Mucosa of descending colon (tissue), 3 donors: ENCODE measurements at regions of chr5 and their contacts with region 1.

Region 1: GRCh38 chr5:67246108-67246507 is 49.5 kb upstream of the CD180 start:
- DNase-seq: peak in 1 of 3 donors; percentile 67
- ATAC-seq: peak; percentile 72
- H3K4me3 ChIP-seq: no peak overlapping the region
- H3K4me1 ChIP-seq: peaks cover 4% of the 10 kb centered on the region
- CTCF ChIP-seq: no peak

Region 2: DNA sequence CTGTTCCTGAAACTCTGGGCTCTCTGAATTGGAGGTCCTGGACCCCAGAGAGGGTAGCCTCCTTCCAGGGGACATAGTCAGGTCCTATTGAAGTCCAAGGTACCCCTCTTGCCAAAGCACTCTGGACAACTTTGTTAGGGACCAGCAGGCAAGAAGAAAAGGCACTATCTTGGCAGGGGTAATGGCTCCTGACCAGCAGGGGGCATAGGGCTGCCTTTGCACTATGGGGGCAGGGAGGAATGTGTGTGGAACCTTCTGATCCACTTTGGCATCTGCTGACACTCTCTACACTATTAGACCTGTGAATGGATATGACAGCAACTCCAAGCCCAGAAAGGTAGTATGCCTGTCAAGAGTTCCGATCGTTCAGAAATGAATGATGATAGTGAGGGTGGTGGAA is 129.5 kb after region 1 on chr5:
- intact Hi-C with region 1: no loop called
- DNase-seq: no peak
- ATAC-seq: peak; percentile 13
- H3K4me3 ChIP-seq: no peak overlapping the region
- H3K4me1 ChIP-seq: no peaks in the 10 kb centered on the region
- CTCF ChIP-seq: no peak

Region 3: DNA sequence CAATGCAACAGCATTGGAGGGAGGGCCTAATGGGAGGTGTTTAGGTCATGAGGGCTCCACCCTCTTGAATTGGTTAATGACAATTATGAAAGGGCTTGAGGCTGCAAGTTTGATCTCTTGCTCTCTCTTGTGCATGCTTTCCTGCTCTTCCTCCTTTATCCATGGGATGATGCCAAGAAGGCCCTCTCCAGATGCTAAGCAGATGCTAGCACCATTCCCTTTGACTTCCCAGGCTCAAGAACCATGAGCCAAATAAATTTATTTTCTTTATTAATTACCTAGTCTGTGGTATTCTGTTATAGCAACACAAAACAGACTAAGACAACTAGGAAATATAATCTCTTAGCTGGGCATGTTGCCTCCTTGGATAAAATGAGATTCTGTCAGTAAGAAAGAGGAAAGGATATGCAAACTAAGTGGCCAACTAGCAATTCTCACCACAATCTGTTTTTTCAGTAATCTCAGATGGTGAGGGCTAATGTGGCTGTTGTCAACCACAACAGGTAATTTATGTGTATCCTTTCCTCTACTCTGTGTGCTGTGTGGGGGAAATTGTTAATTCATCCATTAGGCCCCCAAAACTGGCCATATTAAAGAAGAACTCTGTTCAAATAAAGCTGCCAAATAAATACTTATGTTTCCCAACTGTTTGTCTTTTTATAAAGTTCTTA is 219.6 kb after region 1 on chr5:
- intact Hi-C with region 1: no loop called
- DNase-seq: no peak
- ATAC-seq: no peak
- H3K4me3 ChIP-seq: no peak overlapping the region
- H3K4me1 ChIP-seq: no peaks in the 10 kb centered on the region
- CTCF ChIP-seq: no peak

Region 4: GRCh38 chr5:68252673-68253623 is 1006.8 kb after region 1 on chr5:
- intact Hi-C with region 1: loop called (anchors 5 kb)
- DNase-seq: peak in 1 of 3 donors; percentile 72
- ATAC-seq: peak; percentile 75
- H3K4me3 ChIP-seq: no peak overlapping the region
- H3K4me1 ChIP-seq: peaks cover 33% of the 10 kb centered on the region
- CTCF ChIP-seq: peak; percentile 17